Right ventricle myocardium inferior (tissue), 1 donor: ENCODE measurements at regions of chr20 and their contacts with region 1.

Region 1: DNA sequence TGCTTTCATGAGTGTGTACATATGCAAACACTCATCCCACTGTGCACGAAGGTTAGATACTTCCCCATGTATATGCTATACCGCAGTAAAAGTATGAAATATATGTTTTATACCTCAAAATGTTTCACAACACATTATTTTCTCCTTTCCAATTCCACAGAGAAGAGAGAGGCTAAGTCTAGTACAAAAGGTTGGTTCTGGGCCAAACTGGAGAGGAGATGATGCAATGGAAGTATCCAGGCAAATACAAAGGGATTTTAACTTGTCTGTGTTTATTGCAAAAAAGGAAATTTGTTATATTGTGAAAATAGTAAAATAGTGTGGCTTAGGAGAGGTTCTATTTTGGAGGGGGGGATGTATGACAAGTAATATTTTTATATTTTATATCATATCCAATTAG is 112.6 kb downstream of the PLCB1 start:
- DNase-seq: no peak
- ATAC-seq: peak; percentile 67

Region 2: DNA sequence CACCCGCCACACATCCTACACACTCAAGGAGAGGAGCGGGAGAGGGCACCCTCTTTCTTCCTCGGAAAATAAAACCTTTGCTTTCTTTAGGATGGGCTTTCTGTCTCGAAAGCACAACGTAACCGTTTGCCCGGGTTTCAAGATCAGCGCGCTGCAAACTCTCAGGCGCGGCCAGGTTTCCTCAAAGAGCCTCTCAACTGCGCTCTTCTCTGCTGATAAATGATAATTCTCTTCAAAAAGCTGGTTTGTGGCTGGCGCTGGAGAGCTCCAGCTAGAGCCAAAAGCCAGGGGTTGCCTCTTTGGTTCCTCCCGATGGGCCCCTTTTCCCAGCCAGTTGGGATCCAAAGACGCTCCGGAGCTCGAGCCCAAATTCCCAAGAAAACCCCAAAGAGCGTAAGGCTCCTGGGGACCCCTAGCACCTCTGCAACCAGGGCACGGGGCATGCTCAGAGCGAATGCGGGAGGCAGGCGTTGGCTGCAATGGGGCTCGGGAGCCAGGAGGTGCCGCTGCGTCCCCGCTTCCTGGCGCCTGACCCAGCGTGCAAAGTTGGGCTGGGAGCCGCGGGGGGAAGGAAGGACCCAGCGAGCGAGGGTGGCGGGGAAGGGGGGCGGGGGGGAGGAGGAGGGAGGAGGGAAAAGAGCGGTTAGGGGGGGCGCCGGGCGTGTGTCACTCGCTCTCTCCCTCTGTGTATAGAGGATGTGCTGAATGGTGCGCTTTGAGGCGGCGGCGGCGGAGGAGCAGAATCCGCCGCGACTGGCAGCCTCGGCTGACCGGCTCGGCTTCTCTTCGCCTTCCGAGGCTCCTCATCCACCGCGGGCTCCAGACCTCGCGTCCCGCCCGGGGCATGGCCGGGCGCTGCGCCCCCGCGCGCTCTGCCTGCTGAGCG is 112.8 kb before region 1 on chr20 and contains the start of gene PLCB1:
- intact Hi-C with region 1: no loop called
- DNase-seq: peak; percentile 93
- ATAC-seq: peak; percentile 90
- total RNA-seq, gene PLCB1: 7.2 TPM

Region 3: GRCh38 chr20:8161264-8162071 is 83.2 kb before region 1 on chr20:
- intact Hi-C with region 1: loop called (anchors 5 kb)
- DNase-seq: peak; percentile 25
- ATAC-seq: peak; percentile 61

Region 4: GRCh38 chr20:8175741-8176675 is 68.6 kb before region 1 on chr20:
- intact Hi-C with region 1: no loop called
- DNase-seq: no peak
- ATAC-seq: no peak